ENCODE measurements at regions of chr17 and their contacts with region 1.

Region 1: GRCh38 chr17:7296189-7296902 is 1.9 kb upstream of the YBX2 start:
- DNase-seq: peak; percentile 94
- H3K4me3 ChIP-seq: peak overlapping the region in 2 of 8 donors; percentile 37 to 52
- H3K27ac ChIP-seq: peak overlapping the region in 1 of 8 donors; percentile 7
- H3K4me1 ChIP-seq: peaks cover 17 to 40% (median 33%) of the 10 kb centered on the region in 6 donors
- H3K27me3 ChIP-seq: peaks cover 0 to 60% (median 38%) of the 10 kb centered on the region in 7 donors
- CTCF ChIP-seq: peak; percentile 62 to 96 (median 89)
- POLR2A ChIP-seq: no peak

Region 2: GRCh38 chr17:7252176-7253043 is 43.9 kb before region 1 on chr17 and contains the start of gene ELP5:
- intact Hi-C with region 1: no loop called
- DNase-seq: peak; percentile 99
- H3K4me3 ChIP-seq: peak within 1 kb of the TSS; percentile 89 to 99 (median 94)
- H3K27ac ChIP-seq: peak within 1 kb of the TSS; percentile 97 to 100 (median 99)
- H3K4me1 ChIP-seq: peaks cover 30 to 57% (median 45%) of the 10 kb centered on the region in 6 donors
- H3K27me3 ChIP-seq: no peaks in the 10 kb centered on the region
- CTCF ChIP-seq: peak in 6 of 11 experiments; percentile 6 to 55 (median 33)
- POLR2A ChIP-seq: peak in 2 of 3 donors; percentile 8 to 15
- total RNA-seq, gene ELP5: 22.1 to 40.3 (median 36.3) TPM

Region 3: GRCh38 chr17:7280519-7281429 is 15.6 kb before region 1 on chr17:
- intact Hi-C with region 1: loop called (anchors 2 kb)
- DNase-seq: peak; percentile 95
- H3K4me3 ChIP-seq: peak overlapping the region; percentile 30 to 67 (median 43)
- H3K27ac ChIP-seq: peak overlapping the region in 6 of 8 donors; percentile 47 to 69 (median 62)
- H3K4me1 ChIP-seq: peaks cover 17 to 34% (median 30%) of the 10 kb centered on the region in 6 donors
- H3K27me3 ChIP-seq: peaks cover 0 to 57% (median 20%) of the 10 kb centered on the region in 7 donors
- CTCF ChIP-seq: peak; percentile 77 to 98 (median 94)
- POLR2A ChIP-seq: no peak

Region 4: GRCh38 chr17:7413346-7413985 is 117.1 kb after region 1 on chr17:
- intact Hi-C with region 1: no loop called
- DNase-seq: no peak
- H3K4me3 ChIP-seq: no peak overlapping the region
- H3K27ac ChIP-seq: peak overlapping the region in 5 of 8 donors; percentile 5 to 33 (median 23)
- H3K4me1 ChIP-seq: peaks cover 0 to under 1% (median 0%) of the 10 kb centered on the region in 6 donors
- H3K27me3 ChIP-seq: peaks cover 0 to 6% (median 0%) of the 10 kb centered on the region in 7 donors
- CTCF ChIP-seq: no peak
- POLR2A ChIP-seq: no peak

Region 5: GRCh38 chr17:7444682-7445618 is 148.6 kb after region 1 on chr17 and contains the start of gene CHRNB1:
- intact Hi-C with region 1: no loop called
- DNase-seq: peak; percentile 92
- H3K4me3 ChIP-seq: peak within 1 kb of the TSS; percentile 8 to 67 (median 38)
- H3K27ac ChIP-seq: peak within 1 kb of the TSS in 5 of 8 donors; percentile 23 to 58 (median 37)
- H3K4me1 ChIP-seq: peaks cover 12 to 45% (median 32%) of the 10 kb centered on the region in 6 donors
- H3K27me3 ChIP-seq: peaks cover 0 to 72% (median 35%) of the 10 kb centered on the region in 7 donors
- CTCF ChIP-seq: peak in 1 of 11 experiments; percentile 21
- POLR2A ChIP-seq: no peak
- total RNA-seq, gene CHRNB1: 7.3 to 12.9 (median 11.4) TPM